CD14-positive monocyte (primary cell): ENCODE measurements at regions of chr7 and their contacts with region 1.

Region 1: DNA sequence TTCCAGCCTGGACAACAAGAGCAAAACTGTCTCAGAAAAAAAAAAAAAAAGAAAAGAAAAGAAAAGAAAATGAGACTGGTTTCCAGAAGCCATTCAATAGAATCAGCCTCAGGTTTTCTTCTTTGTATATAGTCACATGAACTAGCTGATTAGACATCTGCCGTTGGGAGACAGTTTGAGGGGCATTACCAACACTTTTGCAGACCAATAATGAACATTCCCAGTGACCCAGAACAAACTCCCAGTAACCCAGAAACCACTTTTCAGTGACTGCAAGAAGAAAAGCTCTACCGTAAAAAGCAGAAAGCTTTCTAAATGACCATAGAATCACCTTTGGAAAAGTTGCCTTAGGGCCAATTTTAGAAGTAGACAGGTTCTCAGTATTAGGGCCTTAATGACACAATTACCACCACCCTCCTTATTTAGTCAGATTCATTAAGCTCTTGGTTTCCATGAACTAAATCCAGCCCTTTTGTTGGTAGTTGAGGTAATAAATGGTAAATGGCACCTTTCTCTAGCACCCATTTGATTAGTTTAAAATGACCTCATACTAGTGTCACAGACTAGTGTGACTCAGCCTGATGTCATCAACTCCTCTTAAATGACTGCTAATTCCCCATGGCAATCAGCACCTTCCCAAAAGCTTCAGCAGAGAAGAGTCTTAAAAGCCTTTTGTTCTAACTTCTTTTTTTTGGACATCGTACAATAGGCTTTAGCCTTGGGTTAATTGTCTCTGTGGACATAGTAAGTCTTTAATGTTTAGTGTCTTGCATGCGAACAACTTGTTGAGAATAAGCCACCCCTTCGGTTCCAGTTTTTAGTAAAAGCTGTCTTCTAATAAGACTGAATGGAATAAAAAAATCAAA is 33.6 kb upstream of the XRCC2 start:
- DNase-seq: peak in 2 of 3 donors; percentile 11 to 57
- H3K4me3 ChIP-seq: no peak overlapping the region
- H3K4me3 Mint-ChIP-seq: no peak overlapping the region
- H3K27ac ChIP-seq: no peak overlapping the region
- H3K27ac Mint-ChIP-seq: no peak overlapping the region
- H3K4me1 ChIP-seq: peaks cover 4 to 5% of the 10 kb centered on the region in 2 donors
- H3K4me1 Mint-ChIP-seq: peaks cover 7% of the 10 kb centered on the region
- H3K27me3 ChIP-seq: no peaks in the 10 kb centered on the region
- H3K27me3 Mint-ChIP-seq: peaks cover 0 to 7% (median 0%) of the 10 kb centered on the region in 3 donors
- CTCF ChIP-seq: no peak

Region 2: DNA sequence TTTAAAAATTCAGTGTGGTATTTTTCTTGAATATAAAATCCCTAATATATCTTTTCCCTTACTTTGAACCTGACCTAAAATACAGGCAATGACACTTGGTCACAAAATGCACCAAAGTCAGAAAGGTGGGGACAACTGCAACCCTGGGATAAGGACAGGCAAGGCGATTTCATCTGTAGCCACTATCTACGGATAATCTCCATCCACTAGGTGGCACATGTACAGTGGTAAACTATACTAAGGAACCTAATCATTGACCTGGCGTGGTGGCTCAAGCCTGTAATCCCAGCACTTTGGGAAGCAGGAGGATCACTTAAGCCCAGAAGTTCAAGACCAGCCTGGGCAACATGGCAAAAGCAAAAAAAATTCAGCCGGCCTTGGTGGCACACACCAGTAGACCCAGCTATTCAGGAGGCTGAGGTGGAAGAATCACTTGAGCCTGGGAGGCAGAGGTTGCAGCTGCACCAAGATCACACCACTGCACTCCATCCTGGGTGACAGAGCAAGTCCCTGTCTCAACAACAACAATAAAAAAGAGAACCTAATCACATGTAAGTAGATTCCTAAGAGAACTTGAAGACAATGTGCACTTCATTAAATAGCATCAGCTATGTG is 372.7 kb before region 1 on chr7:
- intact Hi-C with region 1: loop called (anchors 5 to 10 kb)
- DNase-seq: peak in 2 of 3 donors; percentile 39 to 47
- H3K4me3 ChIP-seq: no peak overlapping the region
- H3K4me3 Mint-ChIP-seq: no peak overlapping the region
- H3K27ac ChIP-seq: peak overlapping the region in 1 of 2 donors; percentile 66
- H3K27ac Mint-ChIP-seq: peak overlapping the region; percentile 38 to 85 (median 48)
- H3K4me1 ChIP-seq: peaks cover 28 to 40% of the 10 kb centered on the region in 2 donors
- H3K4me1 Mint-ChIP-seq: peaks cover 54% of the 10 kb centered on the region
- H3K27me3 ChIP-seq: no peaks in the 10 kb centered on the region
- H3K27me3 Mint-ChIP-seq: no peaks in the 10 kb centered on the region
- CTCF ChIP-seq: peak; percentile 73